ENCODE measurements at regions of chr1 and their contacts with region 1.

Region 1: GRCh38 chr1:160726498-160727315 is 12.3 kb upstream of the SLAMF7 start:
- DNase-seq: peak; percentile 73
- H3K4me3 ChIP-seq: no peak overlapping the region
- H3K4me3 Mint-ChIP-seq: no peak overlapping the region
- H3K27ac Mint-ChIP-seq: no peak overlapping the region
- H3K4me1 ChIP-seq: peaks cover 12% of the 10 kb centered on the region
- H3K4me1 Mint-ChIP-seq: no peaks in the 10 kb centered on the region
- H3K27me3 ChIP-seq: no peaks in the 10 kb centered on the region
- H3K27me3 Mint-ChIP-seq: no peaks in the 10 kb centered on the region
- CTCF ChIP-seq: peak; percentile 74 to 79

Region 2: DNA sequence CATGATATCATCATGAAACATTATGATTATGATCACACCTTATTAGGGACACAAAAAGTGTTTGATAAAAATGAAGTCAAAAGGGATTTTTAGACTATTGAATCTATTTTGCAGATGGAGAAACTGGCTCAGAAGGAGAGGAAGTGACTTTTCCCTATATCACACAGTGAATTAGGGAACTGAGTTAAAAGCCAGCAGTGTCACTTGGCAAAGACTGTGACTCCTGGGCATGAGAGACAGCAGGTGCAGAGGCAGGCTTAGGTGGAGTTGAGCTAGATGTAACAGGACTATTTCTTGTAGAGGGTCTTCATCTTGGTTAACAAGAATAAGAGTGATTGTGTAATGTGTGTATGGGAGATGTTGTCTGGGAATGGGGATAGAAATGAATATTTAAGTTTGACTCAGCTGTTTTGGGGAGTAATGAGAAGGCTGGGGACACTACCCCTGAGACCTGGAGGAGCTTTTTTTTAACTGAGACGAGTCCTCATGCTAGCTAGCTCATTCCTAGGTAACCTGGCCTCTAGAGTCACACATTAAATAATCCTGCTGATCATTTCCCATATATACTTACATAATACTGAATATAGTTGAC is 146.4 kb before region 1 on chr1:
- CTCF ChIA-PET with region 1: no interaction called
- POLR2A ChIA-PET with region 1: no interaction called
- intact Hi-C with region 1: no loop called
- DNase-seq: no peak
- H3K4me3 ChIP-seq: no peak overlapping the region
- H3K4me3 Mint-ChIP-seq: no peak overlapping the region
- H3K27ac Mint-ChIP-seq: no peak overlapping the region
- H3K4me1 ChIP-seq: peaks cover 6% of the 10 kb centered on the region; the same call in 1 of the 2 replicates
- H3K4me1 Mint-ChIP-seq: no peaks in the 10 kb centered on the region
- H3K27me3 ChIP-seq: no peaks in the 10 kb centered on the region
- H3K27me3 Mint-ChIP-seq: peaks cover 3% of the 10 kb centered on the region
- CTCF ChIP-seq: no peak

Region 3: GRCh38 chr1:160768295-160768657 is 41.6 kb after region 1 on chr1:
- CTCF ChIA-PET with region 1: no interaction called
- POLR2A ChIA-PET with region 1: no interaction called
- intact Hi-C with region 1: loop called (anchors 1 kb)
- DNase-seq: peak in 1 of 2 experiments; percentile 13
- H3K4me3 ChIP-seq: no peak overlapping the region
- H3K4me3 Mint-ChIP-seq: no peak overlapping the region
- H3K27ac Mint-ChIP-seq: no peak overlapping the region
- H3K4me1 ChIP-seq: no peaks in the 10 kb centered on the region
- H3K4me1 Mint-ChIP-seq: no peaks in the 10 kb centered on the region
- H3K27me3 ChIP-seq: no peaks in the 10 kb centered on the region; the same call in 1 of the 2 replicates
- H3K27me3 Mint-ChIP-seq: no peaks in the 10 kb centered on the region
- CTCF ChIP-seq: peak in 1 of 2 experiments; percentile 10

Region 4: DNA sequence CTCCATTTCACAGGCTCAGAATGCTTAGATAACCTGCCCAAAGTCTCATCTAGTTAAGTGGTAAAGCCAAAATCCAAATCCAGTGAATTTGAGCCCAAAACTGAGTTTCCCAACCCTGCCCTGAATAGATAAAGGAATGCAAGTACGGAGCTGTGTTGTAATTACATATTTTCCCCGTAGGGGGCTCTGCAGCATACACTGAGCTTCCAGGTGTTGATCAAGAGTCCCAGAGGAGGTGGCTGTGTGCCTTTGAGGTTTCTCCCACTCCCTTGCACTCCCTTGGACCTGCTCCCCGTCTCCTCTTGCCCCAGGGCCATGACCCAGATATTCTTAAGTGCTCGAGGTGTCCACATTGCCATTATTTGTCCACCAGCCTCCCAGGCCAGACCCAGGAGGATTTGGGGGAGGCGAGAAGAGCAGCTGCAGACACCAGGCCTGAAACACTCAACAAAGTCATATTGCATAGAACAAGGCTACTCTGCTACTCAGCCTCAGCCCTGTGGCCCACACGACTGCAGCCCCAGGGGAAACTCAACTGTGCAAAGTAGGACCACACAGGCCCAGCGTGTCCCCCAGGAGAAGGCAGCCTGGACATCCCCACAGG is 50.9 kb after region 1 on chr1:
- CTCF ChIA-PET with region 1: no interaction called
- POLR2A ChIA-PET with region 1: no interaction called
- intact Hi-C with region 1: loop called (anchors 2 kb)
- DNase-seq: peak; percentile 56 to 64
- H3K4me3 ChIP-seq: no peak overlapping the region
- H3K4me3 Mint-ChIP-seq: no peak overlapping the region
- H3K27ac Mint-ChIP-seq: no peak overlapping the region
- H3K4me1 ChIP-seq: peaks cover 20% of the 10 kb centered on the region
- H3K4me1 Mint-ChIP-seq: peaks cover 14% of the 10 kb centered on the region
- H3K27me3 ChIP-seq: no peaks in the 10 kb centered on the region
- H3K27me3 Mint-ChIP-seq: no peaks in the 10 kb centered on the region
- CTCF ChIP-seq: peak; percentile 55 to 70